Activated T-helper 2 cell treated with anti-CD3 and anti-CD28 coated beads, Interferon-gamma antibody, Interleukin-2, Interleukin-4, amounts not matched to agents 10 μg/mL and 5 μg/mL and 100 μg/mL, durations not matched to agents 14 hours and 24 hours and 36 hours (primary cell): ENCODE measurements at regions of chr3 and their contacts with region 1.

Region 1: DNA sequence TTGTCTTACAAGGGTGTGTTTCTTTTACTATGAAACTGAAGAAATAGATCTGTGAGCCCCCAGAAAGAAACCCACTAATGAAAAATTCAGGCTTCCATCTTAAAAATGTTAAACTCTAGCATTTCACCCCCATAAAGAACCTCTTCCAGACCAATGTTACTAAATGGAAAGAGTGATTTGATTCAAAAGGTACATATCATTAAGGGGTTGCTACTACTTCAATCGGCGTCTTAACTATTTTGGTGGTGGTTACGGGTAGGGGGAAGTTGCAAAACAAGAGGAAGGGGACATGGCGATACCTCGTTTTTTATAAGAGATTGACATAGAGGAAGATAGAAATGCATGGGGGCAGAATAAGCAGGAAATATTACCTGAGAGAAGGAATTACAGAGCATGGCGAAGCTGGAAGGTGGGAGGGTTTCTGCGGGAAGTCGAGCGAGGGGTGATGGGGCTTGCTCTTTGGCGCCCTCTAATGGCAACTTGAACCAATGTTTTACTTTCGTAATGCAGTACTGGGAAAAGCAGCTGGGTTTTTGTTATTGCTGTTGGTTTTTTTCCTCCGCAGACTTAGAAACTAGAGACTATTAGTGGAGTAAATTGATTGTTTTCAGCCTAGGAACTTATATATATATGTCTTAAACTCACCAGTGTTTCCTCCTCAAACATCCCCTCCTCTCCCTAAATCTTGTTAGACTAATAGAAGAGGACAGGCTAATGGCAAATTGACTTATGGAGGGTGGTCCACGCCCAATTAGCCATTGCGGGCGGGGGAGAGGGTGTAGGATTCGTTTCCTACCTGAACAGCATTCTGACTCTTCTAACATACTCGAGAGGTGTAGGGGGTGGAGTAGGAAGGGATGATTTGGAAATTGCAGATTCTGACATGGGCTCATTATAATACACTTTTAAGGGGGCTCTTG is 11.3 kb upstream of the SOX2 start:
- DNase-seq: peak; percentile 40
- H3K4me3 Mint-ChIP-seq: peak overlapping the region; percentile 62
- H3K27ac Mint-ChIP-seq: no peak overlapping the region
- H3K4me1 Mint-ChIP-seq: peaks cover 20% of the 10 kb centered on the region
- H3K27me3 Mint-ChIP-seq: peaks cover 87% of the 10 kb centered on the region

Region 2: GRCh38 chr3:180679178-180680096 is 1021.0 kb before region 1 on chr3 and contains the start of gene CCDC39:
- intact Hi-C with region 1: loop called (anchors 10 kb)
- DNase-seq: peak; percentile 45
- H3K4me3 Mint-ChIP-seq: peak within 1 kb of the TSS; percentile 83
- H3K27ac Mint-ChIP-seq: no peak within 1 kb of the TSS
- H3K4me1 Mint-ChIP-seq: peaks cover 8% of the 10 kb centered on the region
- H3K27me3 Mint-ChIP-seq: peaks cover 44% of the 10 kb centered on the region
- total RNA-seq, gene CCDC39: not detected in 2 replicates

Region 3: GRCh38 chr3:181210275-181210674 is 490.2 kb before region 1 on chr3:
- intact Hi-C with region 1: loop called (anchors 2 kb)
- DNase-seq: no peak
- H3K4me3 Mint-ChIP-seq: no peak overlapping the region
- H3K27ac Mint-ChIP-seq: no peak overlapping the region
- H3K4me1 Mint-ChIP-seq: no peaks in the 10 kb centered on the region
- H3K27me3 Mint-ChIP-seq: no peaks in the 10 kb centered on the region

Region 4: DNA sequence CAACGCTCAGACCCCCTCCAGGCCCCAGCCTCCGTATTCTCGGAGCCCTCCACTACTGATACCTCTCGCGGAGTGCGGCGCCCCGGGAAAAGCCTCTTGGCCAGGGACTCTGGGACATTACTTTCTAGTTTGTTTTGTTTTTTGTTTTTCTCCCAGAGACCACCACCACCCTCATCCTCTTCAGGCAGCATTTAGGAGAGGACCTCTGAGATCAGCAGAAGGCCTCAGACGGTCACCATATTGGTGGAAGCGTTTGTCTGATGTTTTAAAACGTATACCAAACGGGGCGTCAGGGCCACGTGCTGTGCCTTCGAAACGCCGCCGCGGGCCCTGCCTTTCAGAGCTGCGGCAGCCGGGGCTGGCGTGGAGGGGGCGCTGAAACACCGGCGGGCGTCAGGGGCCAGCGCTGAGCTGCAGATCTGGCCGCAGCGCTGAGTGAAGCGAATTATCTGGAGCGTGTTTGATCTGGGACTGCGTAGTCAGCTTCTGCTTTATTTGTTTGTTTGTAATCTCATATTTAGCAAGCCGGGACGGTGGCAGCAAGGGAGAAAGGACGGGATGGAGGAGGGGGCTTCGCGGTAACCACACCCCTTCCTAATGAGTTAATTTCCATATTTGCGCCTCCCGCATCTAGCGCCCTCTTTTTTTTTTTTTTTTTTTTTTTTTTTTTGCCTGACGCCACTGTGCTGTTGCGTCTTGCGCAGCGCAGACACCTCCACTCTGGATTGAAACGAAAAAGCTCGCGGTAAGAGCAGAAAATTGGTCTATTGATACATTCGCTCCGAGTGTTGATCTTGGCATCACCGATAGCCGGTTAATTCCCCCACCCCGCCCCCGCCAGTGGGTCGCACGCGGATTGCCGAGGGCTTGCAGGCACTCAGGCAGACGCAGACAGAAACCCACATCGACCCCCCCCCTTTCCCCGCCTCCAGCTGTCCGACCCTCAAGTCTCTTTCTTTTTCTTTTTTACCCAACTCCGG is 26.2 kb after region 1 on chr3:
- intact Hi-C with region 1: loop called (anchors 1 kb)
- DNase-seq: no peak
- H3K4me3 Mint-ChIP-seq: peak overlapping the region; percentile 15
- H3K27ac Mint-ChIP-seq: no peak overlapping the region
- H3K4me1 Mint-ChIP-seq: peaks cover 6% of the 10 kb centered on the region
- H3K27me3 Mint-ChIP-seq: peaks cover 86% of the 10 kb centered on the region

Region 5: DNA sequence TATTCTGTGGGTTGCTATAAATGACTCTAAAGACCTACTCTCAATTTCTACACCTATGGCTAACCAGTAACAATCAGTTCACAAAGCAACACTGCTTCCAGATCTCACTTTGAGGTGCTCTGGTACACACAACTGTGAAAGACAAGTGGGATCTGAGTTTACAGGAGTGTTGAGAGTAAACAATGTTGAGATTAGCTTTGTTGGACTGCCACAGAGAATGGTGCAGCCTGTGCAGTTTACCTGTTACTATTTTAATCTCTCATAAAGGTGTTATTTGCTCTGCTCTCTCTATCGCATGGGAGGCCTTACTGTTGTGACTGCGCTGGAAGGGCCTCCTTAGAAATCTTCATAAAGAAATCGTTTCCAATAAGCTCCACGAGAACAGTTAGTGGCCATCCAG is 123.3 kb after region 1 on chr3:
- intact Hi-C with region 1: no loop called
- DNase-seq: no peak
- H3K4me3 Mint-ChIP-seq: no peak overlapping the region
- H3K27ac Mint-ChIP-seq: no peak overlapping the region
- H3K4me1 Mint-ChIP-seq: no peaks in the 10 kb centered on the region
- H3K27me3 Mint-ChIP-seq: no peaks in the 10 kb centered on the region

Region 6: DNA sequence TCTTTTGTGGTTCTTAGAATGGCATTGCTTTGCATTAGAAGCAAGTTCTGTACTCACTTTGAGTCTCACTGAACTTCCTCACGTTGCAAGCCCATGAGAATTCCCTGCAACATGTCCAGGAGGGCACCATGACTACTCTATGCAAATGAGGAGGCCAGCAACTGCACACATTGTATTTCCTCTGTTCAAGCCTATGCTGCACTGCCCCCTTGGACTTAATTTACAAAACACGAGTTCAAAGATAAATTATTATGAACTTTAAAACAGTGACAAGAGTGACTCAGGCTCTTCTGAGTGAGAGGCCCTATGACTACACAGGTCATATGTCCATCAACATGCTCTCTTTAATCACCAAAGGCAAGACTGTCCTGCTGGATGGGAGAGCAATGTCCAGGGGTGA is 608.7 kb after region 1 on chr3:
- intact Hi-C with region 1: no loop called
- DNase-seq: no peak
- H3K4me3 Mint-ChIP-seq: no peak overlapping the region
- H3K27ac Mint-ChIP-seq: no peak overlapping the region
- H3K4me1 Mint-ChIP-seq: no peaks in the 10 kb centered on the region
- H3K27me3 Mint-ChIP-seq: no peaks in the 10 kb centered on the region